CD8-positive, alpha-beta T cell (primary cell): ENCODE measurements at regions of chr20 and their contacts with region 1.

Region 1: DNA sequence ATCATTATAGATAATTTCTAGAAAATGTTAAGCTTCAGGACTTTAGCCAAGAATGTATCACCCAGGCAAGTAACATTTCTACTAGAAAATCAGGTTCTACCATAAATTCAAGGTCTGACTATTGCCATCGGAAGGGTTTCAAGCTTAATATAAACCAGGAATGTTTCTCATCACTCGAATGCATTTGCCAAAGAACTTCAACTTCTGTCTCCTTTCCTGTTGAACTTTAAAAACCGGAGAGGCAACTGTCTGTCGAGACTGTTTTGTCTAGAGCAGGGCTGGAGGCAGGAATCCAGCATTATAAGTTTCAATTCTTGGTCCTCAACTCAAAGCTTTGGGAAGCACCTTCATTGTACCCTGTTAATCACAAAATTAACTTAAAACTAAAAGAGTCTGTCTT is 264.7 kb downstream of the ZNF217 start:
- DNase-seq: no peak
- ATAC-seq: no peak
- H3K4me3 ChIP-seq: no peak overlapping the region
- H3K4me3 Mint-ChIP-seq: no peak overlapping the region
- H3K27ac ChIP-seq: no peak overlapping the region
- H3K27ac Mint-ChIP-seq: no peak overlapping the region
- H3K4me1 ChIP-seq: no peaks in the 10 kb centered on the region
- H3K4me1 Mint-ChIP-seq: peaks cover 4% of the 10 kb centered on the region
- H3K27me3 ChIP-seq: no peaks in the 10 kb centered on the region
- H3K27me3 Mint-ChIP-seq: peaks cover 3% of the 10 kb centered on the region
- CTCF ChIP-seq: no peak

Region 2: GRCh38 chr20:52837378-52837777 is 491.6 kb before region 1 on chr20:
- CTCF ChIA-PET with region 1: no interaction called
- POLR2A ChIA-PET with region 1: no interaction called
- intact Hi-C with region 1: no loop called
- DNase-seq: no peak
- ATAC-seq: no peak
- H3K4me3 ChIP-seq: no peak overlapping the region
- H3K4me3 Mint-ChIP-seq: no peak overlapping the region
- H3K27ac ChIP-seq: no peak overlapping the region
- H3K27ac Mint-ChIP-seq: no peak overlapping the region
- H3K4me1 ChIP-seq: no peaks in the 10 kb centered on the region
- H3K4me1 Mint-ChIP-seq: no peaks in the 10 kb centered on the region
- H3K27me3 ChIP-seq: no peaks in the 10 kb centered on the region
- H3K27me3 Mint-ChIP-seq: peaks cover 7% of the 10 kb centered on the region
- CTCF ChIP-seq: no peak

Region 3: DNA sequence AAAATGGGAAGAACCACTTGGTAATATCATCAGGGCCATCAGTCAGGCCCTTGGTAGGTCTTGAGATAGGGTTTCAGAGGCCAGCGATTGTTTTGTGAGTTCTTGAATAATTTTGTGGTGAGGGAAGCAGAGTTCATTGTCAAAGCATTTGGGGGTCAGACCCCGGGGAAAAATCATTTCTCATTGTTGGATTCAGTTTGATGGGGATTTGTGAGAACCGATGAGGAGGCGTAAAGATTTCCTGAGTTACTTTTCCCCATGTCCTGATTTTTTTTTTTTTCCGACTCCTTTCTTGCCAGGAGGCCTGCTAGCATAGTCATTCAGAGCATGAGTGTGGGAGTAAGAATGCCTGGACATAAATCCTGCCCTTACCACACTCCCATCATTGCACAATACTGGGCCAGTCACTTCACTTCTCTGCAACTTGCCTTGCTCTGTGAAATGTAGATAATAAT is 296.5 kb before region 1 on chr20:
- CTCF ChIA-PET with region 1: no interaction called
- POLR2A ChIA-PET with region 1: no interaction called
- intact Hi-C with region 1: no loop called
- DNase-seq: no peak
- ATAC-seq: no peak
- H3K4me3 ChIP-seq: no peak overlapping the region
- H3K4me3 Mint-ChIP-seq: no peak overlapping the region
- H3K27ac ChIP-seq: no peak overlapping the region
- H3K27ac Mint-ChIP-seq: no peak overlapping the region
- H3K4me1 ChIP-seq: peaks cover 3% of the 10 kb centered on the region
- H3K4me1 Mint-ChIP-seq: peaks cover 12% of the 10 kb centered on the region
- H3K27me3 ChIP-seq: no peaks in the 10 kb centered on the region
- H3K27me3 Mint-ChIP-seq: peaks cover 16% of the 10 kb centered on the region
- CTCF ChIP-seq: no peak

Region 4: GRCh38 chr20:53352727-53353442 is 23.9 kb after region 1 on chr20:
- CTCF ChIA-PET with region 1: no interaction called
- POLR2A ChIA-PET with region 1: interaction called, 3 read pairs
- intact Hi-C with region 1: loop called in 1 of 2 experiments (anchors 2 kb)
- DNase-seq: no peak
- ATAC-seq: no peak
- H3K4me3 ChIP-seq: no peak overlapping the region
- H3K4me3 Mint-ChIP-seq: no peak overlapping the region
- H3K27ac ChIP-seq: no peak overlapping the region
- H3K27ac Mint-ChIP-seq: no peak overlapping the region
- H3K4me1 ChIP-seq: no peaks in the 10 kb centered on the region
- H3K4me1 Mint-ChIP-seq: no peaks in the 10 kb centered on the region
- H3K27me3 ChIP-seq: peaks cover 0 to 2% of the 10 kb centered on the region in 2 experiments
- H3K27me3 Mint-ChIP-seq: peaks cover 2% of the 10 kb centered on the region
- CTCF ChIP-seq: no peak